ENCODE measurements at regions of chr2 and their contacts with region 1.

Region 1: DNA sequence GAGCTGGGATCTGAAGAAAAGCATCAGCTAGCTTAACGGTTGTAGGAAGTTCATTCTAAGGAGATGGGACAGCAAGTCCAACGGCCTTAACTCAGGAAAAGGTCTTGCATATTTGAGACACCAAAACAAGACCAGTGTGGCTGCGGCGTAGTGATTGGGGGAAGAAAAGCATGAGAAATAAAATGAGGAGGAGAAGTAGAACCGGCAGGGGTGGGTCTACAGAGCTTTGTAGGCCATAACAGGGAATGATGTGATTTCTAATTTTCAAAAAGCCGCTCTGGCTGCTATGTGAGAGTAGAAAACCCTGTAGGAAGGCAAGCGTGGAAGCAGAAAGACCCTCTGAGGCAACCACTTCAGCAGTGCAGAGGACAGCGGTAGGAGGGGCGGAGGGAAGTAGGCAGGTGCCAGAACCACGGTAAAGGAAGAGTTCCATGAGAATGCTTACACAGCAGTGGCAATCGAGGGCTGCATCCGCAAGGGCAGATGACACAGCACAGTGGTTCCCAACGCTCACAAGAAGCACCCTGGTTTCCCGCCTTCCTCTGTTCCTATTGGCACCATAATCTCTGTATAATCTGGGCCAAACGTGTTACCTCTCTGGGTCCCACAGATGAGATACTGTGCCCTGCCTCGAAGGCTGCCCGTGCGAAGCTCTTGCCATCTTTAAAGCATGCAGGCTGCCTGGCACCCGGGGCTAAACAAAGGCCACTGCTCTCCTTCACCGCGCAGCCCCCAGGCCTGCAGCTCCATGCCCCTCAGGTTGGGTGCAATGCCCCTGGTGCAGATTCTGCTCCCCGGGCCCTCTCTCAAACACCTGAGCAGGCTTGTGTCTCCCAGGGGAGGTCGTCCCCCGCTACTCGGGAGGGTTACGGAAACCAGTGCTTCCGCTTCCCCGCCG is 791 bp downstream of the ANKRD39 start:
- DNase-seq: peak; percentile 65
- H3K4me3 Mint-ChIP-seq: peak overlapping the region; percentile 86
- H3K27ac Mint-ChIP-seq: peak overlapping the region; percentile 71
- H3K4me1 Mint-ChIP-seq: peaks cover 34% of the 10 kb centered on the region
- H3K27me3 Mint-ChIP-seq: no peaks in the 10 kb centered on the region

Region 2: DNA sequence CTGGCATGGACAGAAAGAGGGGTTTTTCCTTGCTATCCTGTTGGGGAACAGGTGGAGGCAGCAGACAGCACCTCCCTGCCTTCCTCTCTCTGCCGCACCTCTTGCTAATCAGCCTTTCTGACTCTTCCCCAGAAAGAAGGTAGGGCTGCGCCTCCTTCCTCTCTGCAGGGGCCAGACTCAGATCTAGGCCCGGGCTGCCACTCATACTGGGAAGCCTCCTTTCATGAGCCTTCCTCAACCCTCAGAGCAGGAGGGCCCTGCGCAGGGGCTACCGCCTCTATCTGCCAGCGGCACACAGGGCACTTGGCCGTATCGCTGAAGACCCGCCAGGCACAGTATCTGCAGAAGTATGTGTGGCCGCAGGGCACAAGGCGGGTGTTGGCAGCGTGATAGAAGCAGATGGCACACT is 359.0 kb before region 1 on chr2:
- CTCF ChIA-PET with region 1: no interaction called
- intact Hi-C with region 1: no loop called
- DNase-seq: no peak
- H3K4me3 Mint-ChIP-seq: no peak overlapping the region
- H3K27ac Mint-ChIP-seq: no peak overlapping the region
- H3K4me1 Mint-ChIP-seq: peaks cover 31% of the 10 kb centered on the region
- H3K27me3 Mint-ChIP-seq: no peaks in the 10 kb centered on the region

Region 3: DNA sequence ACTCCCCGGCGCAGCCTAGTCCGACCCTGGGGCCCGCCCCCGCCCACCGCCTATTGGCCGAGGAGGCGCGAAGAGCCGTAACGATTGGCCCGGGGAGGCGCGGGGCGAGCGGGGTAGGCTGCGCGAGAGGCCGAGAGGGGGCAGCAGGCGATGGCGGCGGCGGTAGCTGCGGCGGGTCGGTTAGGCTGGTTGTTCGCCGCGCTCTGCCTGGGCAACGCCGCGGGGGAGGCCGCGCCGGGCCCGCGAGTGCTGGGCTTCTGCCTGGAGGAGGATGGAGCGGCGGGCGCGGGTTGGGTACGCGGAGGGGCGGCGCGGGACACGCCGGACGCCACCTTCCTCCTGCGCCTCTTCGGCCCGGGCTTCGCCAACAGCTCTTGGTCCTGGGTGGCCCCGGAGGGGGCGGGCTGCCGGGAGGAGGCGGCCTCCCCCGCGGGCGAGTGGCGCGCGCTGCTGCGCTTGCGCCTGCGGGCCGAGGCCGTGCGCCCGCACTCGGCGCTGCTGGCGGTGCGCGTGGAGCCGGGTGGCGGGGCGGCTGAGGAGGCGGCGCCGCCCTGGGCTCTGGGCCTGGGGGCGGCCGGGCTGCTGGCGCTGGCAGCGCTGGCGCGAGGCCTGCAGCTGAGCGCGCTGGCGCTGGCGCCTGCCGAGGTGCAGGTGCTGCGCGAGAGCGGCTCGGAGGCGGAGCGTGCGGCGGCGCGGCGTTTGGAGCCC is 40.7 kb before region 1 on chr2 and contains the start of gene CNNM3:
- CTCF ChIA-PET with region 1: interaction called, 5 read pairs
- intact Hi-C with region 1: loop called (anchors 1 kb)
- DNase-seq: peak; percentile 97
- H3K4me3 Mint-ChIP-seq: peak within 1 kb of the TSS; percentile 77
- H3K27ac Mint-ChIP-seq: peak within 1 kb of the TSS; percentile 40
- H3K4me1 Mint-ChIP-seq: peaks cover 54% of the 10 kb centered on the region
- H3K27me3 Mint-ChIP-seq: no peaks in the 10 kb centered on the region
- total RNA-seq, gene CNNM3: 17.3 to 19.9 TPM

Region 4: DNA sequence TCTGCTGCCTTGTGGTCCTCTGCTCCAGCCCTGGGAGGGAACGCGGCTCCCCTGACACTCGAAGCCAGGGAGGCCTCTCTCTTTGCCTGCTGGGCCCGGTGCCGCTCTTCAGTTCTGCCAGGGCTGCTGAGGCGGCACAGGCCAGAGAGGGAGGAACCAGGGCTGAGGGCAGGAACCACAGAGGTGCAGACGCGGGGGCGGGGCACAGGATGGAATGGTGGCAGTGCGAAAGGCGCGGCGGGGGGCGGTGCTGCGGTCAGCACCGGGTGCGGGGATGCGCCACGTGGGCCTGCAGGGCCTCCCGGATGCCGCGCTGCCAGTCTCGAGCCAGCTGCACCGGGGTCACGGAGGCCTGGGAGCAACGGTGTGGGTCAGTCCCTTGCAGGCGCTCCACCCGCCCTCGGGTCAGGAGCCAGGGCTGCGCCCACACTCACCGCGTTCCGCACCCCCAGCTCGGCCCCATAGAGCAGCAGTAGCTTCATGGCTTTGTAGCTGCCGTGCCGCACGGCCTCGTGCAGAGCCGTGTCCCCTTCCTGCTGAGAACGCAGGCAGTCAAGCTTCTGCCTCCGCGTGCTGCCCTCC is 17.6 kb before region 1 on chr2:
- CTCF ChIA-PET with region 1: interaction called, 10 read pairs
- intact Hi-C with region 1: loop called (anchors 1 kb)
- DNase-seq: peak; percentile 89
- H3K4me3 Mint-ChIP-seq: peak overlapping the region; percentile 49
- H3K27ac Mint-ChIP-seq: no peak overlapping the region
- H3K4me1 Mint-ChIP-seq: peaks cover 11% of the 10 kb centered on the region
- H3K27me3 Mint-ChIP-seq: no peaks in the 10 kb centered on the region

Region 5: DNA sequence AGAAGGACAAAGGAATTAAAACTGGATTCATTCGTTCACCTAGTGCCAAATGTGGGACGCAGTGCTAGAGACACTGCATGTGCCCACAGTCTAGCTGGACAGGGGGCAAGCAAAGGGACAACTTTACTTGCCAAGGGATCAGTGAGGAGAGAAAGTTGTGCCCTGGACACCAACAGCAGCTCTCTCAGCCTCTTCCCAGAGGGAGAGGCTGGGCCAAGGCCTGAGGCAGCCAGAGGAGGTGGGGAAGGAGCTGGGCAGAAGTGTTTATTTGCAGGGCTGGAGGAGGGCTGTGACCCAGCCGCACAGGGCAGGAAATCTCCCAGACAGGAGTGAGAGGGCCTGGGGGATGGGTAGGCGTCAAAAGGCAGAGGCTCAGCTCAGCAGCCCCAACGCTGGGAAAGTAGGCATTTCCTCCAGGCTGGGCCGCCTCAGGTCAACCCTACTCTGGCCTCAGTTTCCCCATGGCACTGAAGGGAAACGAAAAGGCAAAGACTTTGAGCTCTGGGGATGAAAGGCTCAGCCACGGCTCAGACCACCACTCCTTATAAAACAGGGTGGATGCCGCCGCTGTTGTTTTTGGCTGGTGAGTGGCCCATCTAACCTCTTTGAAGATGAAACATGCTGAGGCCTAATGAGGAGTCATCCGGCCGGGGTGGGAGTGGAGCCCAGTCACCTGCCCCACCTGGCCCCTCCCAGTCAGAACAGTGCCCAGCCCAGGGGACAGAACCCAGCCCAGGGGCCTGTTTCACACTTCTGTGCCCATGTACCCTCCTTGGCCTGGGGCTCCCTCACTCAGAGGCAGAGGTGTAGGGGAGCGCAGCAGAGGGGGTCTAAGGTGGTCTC is 34.7 kb after region 1 on chr2:
- CTCF ChIA-PET with region 1: interaction called, 11 read pairs
- intact Hi-C with region 1: no loop called
- DNase-seq: peak; percentile 35
- H3K4me3 Mint-ChIP-seq: no peak overlapping the region
- H3K27ac Mint-ChIP-seq: no peak overlapping the region
- H3K4me1 Mint-ChIP-seq: peaks cover 54% of the 10 kb centered on the region
- H3K27me3 Mint-ChIP-seq: no peaks in the 10 kb centered on the region

Region 6: DNA sequence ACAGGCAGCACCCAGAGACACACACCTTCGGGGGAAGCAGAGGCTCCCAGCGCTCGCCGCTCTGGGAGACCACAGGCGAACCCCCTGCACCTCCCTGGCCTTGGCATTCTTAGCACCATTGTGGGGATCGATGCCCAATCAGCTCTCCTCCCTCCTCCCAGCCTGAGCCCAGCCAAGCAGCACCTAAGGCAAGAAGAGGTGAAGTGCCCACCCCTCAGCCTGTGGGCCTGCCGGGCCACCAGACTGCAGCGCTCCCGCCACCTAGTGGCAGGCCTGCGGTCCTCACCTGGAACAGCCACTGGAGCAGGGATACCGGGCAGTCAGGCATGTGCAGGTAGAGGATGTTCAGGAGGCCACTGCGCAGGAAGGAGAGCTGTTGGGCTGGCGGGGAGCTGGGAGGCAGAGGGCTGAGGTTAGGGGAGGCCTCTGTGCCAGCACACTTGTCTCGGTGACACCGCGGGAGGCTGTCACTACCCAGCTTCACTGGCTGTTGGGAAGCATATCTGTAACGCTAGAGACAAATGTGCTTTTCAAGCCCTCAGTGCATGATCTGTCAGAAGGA is 94.1 kb after region 1 on chr2:
- CTCF ChIA-PET with region 1: interaction called, 214 read pairs
- intact Hi-C with region 1: loop called (anchors 1 kb)
- DNase-seq: peak; percentile 81
- H3K4me3 Mint-ChIP-seq: no peak overlapping the region
- H3K27ac Mint-ChIP-seq: no peak overlapping the region
- H3K4me1 Mint-ChIP-seq: peaks cover 17% of the 10 kb centered on the region
- H3K27me3 Mint-ChIP-seq: no peaks in the 10 kb centered on the region